ENCODE measurements at regions of chr5 and their contacts with region 1.

Region 1: GRCh38 chr5:78799266-78800017 is 150.9 kb upstream of the LHFPL2 start:
- DNase-seq: no peak
- H3K4me3 ChIP-seq: no peak overlapping the region
- H3K4me3 Mint-ChIP-seq: no peak overlapping the region
- H3K27ac Mint-ChIP-seq: no peak overlapping the region
- H3K4me1 ChIP-seq: peaks cover 18% of the 10 kb centered on the region
- H3K4me1 Mint-ChIP-seq: peaks cover 29% of the 10 kb centered on the region
- H3K27me3 ChIP-seq: no peaks in the 10 kb centered on the region
- H3K27me3 Mint-ChIP-seq: no peaks in the 10 kb centered on the region
- CTCF ChIP-seq: no peak

Region 2: DNA sequence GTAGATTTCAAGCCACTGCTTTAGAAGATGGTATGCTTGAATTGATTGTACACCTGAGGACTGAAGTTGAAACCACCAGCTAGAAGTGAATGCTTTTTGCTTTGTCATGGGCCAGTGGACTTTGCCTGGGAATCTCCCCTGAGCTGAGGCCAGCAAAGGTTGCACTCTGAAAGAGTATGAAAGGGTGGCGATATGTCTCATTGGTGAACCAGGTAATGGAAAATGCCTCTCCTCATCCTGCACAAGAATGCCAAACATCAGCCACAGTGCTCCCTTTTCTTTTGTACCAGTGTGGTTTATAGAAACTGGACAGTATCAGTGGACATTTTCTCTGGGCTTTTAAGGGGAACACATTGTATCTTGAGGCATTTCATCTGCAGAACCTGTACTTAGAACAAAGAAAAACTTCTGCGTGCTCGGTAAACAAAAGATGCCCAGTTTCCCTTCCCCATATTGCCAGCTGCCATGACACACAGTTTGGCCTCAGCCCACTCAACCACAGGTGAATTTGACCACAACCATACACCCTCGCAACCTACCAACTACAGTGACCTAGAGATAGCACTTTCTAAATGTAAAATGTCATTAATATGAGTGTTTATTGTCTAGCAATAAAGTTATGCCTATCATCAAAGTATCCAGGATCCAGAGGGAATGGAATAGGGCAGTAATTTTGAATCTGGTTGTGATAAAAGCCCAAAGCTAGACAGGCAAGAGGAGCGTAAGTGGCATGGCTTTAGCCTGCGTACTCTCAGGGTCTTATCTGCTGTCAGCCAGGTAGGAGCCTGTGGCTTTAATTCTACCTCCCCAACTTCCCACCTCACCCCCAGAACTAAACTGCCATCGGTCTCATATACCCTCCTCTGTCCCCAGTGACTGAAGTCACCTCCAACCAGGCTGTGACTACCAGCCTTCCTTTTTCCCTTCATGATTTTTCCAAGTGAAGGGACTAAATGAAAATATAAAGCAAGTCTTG is 71.4 kb before region 1 on chr5:
- CTCF ChIA-PET with region 1: no interaction called
- POLR2A ChIA-PET with region 1: no interaction called
- intact Hi-C with region 1: loop called (anchors 2 kb)
- DNase-seq: peak; percentile 65 to 81
- H3K4me3 ChIP-seq: no peak overlapping the region
- H3K4me3 Mint-ChIP-seq: no peak overlapping the region
- H3K27ac Mint-ChIP-seq: peak overlapping the region; percentile 91
- H3K4me1 ChIP-seq: peaks cover 15% of the 10 kb centered on the region
- H3K4me1 Mint-ChIP-seq: peaks cover 8% of the 10 kb centered on the region
- H3K27me3 ChIP-seq: no peaks in the 10 kb centered on the region
- H3K27me3 Mint-ChIP-seq: no peaks in the 10 kb centered on the region
- CTCF ChIP-seq: no peak

Region 3: DNA sequence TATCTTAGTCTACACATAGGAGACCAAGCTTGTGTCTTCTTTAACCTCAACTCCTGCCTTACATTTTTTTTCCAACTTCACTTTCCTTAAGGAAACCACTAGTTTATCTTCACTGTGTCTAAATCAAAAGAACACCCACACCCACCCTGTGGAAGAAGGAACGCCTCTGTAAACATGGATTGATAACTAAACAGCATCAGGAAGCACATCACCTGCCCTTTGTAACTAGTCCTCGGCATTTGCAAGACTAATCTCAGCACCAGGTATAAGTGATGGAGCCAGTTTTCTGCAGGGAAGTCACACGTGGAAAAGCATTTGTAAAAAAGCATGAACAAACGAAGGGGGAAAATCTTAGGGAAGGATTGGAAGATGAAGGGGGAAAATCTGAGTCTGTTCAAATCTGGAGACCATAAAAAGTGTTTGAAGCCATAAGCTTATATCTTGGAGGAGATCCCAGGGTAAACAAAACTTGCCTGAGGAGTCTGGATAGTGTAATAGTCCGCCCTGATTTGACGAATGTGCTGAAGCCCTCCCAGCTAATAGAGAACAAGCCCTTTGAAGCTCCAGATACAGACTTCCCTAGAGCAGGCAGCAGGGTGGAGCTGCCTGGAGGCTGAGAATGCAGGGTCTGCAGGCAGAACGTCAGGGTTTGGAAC is 33.6 kb before region 1 on chr5:
- CTCF ChIA-PET with region 1: no interaction called
- POLR2A ChIA-PET with region 1: no interaction called
- intact Hi-C with region 1: loop called (anchors 2 kb)
- DNase-seq: peak; percentile 65
- H3K4me3 ChIP-seq: no peak overlapping the region
- H3K4me3 Mint-ChIP-seq: peak overlapping the region; percentile 59
- H3K27ac Mint-ChIP-seq: peak overlapping the region; percentile 83
- H3K4me1 ChIP-seq: peaks cover 34% of the 10 kb centered on the region
- H3K4me1 Mint-ChIP-seq: peaks cover 45% of the 10 kb centered on the region
- H3K27me3 ChIP-seq: no peaks in the 10 kb centered on the region
- H3K27me3 Mint-ChIP-seq: no peaks in the 10 kb centered on the region
- CTCF ChIP-seq: no peak

Region 4: GRCh38 chr5:78787783-78788182 is 11.7 kb before region 1 on chr5:
- CTCF ChIA-PET with region 1: no interaction called
- POLR2A ChIA-PET with region 1: no interaction called
- intact Hi-C with region 1: no loop called
- DNase-seq: no peak
- H3K4me3 ChIP-seq: no peak overlapping the region
- H3K4me3 Mint-ChIP-seq: no peak overlapping the region
- H3K27ac Mint-ChIP-seq: no peak overlapping the region
- H3K4me1 ChIP-seq: peaks cover 1% of the 10 kb centered on the region; the same call in 1 of the 2 replicates
- H3K4me1 Mint-ChIP-seq: peaks cover 17% of the 10 kb centered on the region
- H3K27me3 ChIP-seq: no peaks in the 10 kb centered on the region
- H3K27me3 Mint-ChIP-seq: no peaks in the 10 kb centered on the region
- CTCF ChIP-seq: no peak

Region 5: GRCh38 chr5:79030663-79031484 is 231.4 kb after region 1 on chr5:
- CTCF ChIA-PET with region 1: no interaction called
- POLR2A ChIA-PET with region 1: no interaction called
- intact Hi-C with region 1: no loop called
- DNase-seq: no peak
- H3K4me3 ChIP-seq: no peak overlapping the region
- H3K4me3 Mint-ChIP-seq: no peak overlapping the region
- H3K27ac Mint-ChIP-seq: no peak overlapping the region
- H3K4me1 ChIP-seq: no peaks in the 10 kb centered on the region
- H3K4me1 Mint-ChIP-seq: no peaks in the 10 kb centered on the region
- H3K27me3 ChIP-seq: no peaks in the 10 kb centered on the region
- H3K27me3 Mint-ChIP-seq: no peaks in the 10 kb centered on the region
- CTCF ChIP-seq: no peak